GM13977 (cell line): ENCODE measurements at regions of chr1 and their contacts with region 1.

Region 1: DNA sequence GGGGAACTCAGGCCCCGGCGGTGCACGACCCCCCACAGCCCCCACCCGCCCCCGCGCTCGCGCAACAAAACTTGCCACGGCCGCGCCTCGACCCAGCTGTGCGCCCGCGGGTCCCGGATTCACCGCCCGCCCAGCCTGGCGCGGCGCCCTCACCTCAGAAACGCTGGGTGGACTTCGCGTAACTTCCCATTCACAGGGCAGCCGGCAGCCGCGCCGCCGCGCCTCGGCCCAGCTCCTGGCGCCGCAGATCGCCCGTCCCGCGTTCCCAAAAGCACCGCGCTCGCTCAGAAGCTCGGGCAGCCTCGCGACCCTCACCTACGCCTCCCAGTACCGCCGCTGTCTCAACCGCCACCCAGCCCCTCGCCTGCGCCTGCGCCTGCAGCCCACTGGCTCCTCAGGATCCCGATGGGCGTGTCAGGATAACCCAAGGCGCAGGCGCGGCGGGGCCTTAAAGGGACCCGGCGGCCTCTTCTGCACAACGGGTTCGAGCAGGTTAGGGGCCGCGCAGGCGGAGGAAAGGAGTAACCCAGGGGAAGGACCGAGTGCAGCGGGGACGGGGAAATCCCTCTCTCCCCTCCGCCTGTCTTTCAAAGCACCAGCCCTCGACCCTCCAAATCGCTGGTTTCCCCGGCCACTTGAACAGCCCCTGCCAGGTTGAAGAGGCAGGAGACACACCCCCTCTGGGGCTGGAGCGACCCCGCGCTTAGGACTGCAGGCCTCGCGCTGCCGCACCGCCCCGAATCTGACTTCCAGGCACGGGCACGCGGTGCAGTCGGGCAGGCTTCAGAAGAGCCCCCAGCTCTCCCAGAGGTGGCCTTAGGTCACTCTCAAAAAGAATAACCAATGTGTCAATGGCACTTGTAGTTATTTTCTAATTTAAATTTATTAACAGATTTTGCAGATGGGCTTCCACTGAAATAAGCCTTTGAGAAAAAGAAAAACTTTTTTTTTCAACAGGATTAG is at the start of gene NBPF1:
- DNase-seq: peak; percentile 100
- CTCF ChIP-seq: peak; percentile 40

Region 2: DNA sequence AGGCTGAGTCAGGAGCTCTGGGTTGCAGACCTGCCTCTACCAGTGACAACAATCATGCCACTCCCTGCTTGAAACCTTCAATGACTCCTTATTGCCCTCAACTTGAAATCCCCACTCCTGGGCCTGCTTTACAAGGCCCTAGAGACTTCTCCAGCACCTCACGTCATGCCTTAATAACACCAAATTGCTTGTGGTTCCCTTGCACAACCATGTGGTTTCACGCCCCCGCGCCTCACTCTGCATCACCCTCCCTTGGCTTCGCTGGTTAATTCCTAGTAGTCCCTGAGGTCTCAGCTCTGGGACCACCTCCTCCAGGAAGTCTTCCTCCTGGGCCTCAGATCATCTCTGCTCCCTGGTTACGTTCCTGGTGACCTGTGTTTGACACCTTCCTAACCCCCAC is 490.6 kb before region 1 on chr1:
- in situ Hi-C with region 1: loop called (anchors 25 kb)
- DNase-seq: peak; percentile 70
- CTCF ChIP-seq: no peak

Region 3: GRCh38 chr1:16236511-16237342 is 376.7 kb before region 1 on chr1 and contains the start of gene CPLANE2:
- in situ Hi-C with region 1: loop called (anchors 25 kb)
- DNase-seq: peak; percentile 97
- CTCF ChIP-seq: no peak

Region 4: DNA sequence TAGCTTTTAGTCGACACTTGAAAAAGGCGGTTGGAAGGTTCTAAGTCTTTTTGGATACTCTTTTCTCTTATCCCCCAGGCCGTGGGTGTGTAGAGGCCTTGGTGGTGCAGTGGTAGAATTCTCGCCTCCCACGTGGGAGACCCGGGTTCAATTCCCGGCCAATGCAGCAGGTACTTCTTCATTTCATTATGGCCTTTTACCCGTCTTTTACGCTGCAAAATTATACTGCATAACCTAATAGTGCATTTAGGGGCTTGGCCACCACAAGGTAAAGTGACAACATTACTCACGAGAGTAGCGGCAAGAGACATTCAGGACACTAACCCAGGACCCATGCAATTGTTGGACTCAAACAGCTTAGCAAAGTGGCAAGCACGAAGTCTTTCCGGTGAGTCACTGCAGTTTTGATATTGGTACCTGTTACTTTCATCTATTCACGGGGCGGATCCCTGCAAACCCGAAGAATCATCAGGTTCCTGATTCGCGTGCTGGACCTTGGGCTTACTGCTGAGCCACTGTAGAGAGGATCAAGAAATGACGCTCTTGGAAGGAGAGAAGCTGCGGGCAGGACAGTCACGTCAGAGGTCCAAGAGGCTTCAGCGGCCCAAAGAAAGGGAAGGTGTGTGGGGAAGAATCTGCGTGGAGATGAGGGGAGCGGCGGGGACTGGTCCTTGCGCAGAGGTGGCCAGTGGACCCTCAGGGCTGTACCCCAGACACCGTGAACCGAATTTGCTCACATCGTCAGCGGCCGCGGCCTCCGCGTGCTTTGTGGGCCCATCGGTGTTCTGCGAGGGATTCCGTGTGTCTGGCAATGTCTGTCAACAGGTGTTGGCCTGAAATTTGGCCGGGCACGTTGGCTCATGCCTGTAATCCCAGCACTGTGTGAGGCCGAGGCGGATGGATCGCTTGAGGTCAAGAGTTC is 114.0 kb after region 1 on chr1:
- in situ Hi-C with region 1: loop called (anchors 10 kb)
- DNase-seq: peak; percentile 69
- CTCF ChIP-seq: no peak

Region 5: GRCh38 chr1:17236779-17237560 is 623.5 kb after region 1 on chr1:
- in situ Hi-C with region 1: loop called (anchors 25 kb)
- DNase-seq: peak; percentile 91
- CTCF ChIP-seq: peak; percentile 93